PC-9 (cell line): ENCODE measurements at regions of chr6 and their contacts with region 1.

Region 1: DNA sequence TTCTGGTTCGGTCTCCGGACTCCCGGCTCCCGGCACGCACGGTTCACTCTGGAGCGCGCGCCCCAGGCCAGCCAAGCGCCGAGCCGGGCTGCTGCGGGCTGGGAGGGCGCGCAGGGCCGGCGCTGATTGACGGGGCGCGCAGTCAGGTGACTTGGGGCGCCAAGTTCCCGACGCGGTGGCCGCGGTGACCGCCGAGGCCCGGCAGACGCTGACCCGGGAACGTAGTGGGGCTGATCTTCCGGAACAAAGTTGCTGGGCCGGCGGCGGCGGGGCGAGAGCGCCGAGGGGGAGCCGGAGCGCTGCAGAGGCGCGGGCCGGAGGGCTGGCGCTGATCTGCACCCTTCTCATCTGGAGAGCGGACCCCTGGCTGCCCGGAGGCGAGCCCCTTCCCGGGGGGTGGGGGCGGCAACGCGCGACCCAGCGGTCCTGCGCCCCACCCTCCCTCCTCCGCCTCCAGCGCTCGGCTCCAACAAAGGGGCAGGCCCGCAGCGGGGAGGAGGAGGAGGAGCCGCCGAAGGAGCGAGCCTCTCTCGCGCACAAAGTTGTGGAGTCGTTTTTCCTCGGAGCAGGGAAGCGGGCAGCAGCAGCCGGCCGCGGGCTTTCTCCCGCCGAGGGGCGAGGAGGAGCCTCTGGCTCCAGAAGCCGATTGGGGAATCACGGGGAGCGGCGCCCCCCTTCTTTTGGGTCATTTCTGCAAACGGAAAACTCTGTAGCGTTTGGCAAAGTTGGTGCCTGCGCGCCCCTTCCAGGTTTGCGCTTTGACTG is at the start of gene UTRN:
- DNase-seq: peak; percentile 68 to 81
- H3K4me3 ChIP-seq: peak within 1 kb of the TSS; percentile 93
- H3K27ac ChIP-seq: peak within 1 kb of the TSS; percentile 87
- H3K4me1 ChIP-seq: peaks cover 24% of the 10 kb centered on the region
- H3K27me3 ChIP-seq: no peaks in the 10 kb centered on the region
- CTCF ChIP-seq: no peak
- total RNA-seq, gene UTRN: 108 and 125 TPM in 2 replicates

Region 2: GRCh38 chr6:144149891-144150709 is 134.9 kb before region 1 on chr6 and contains the start of gene STX11:
- CTCF ChIA-PET with region 1: no interaction called
- POLR2A ChIA-PET with region 1: no interaction called
- intact Hi-C with region 1: loop called (anchors 1 kb)
- DNase-seq: peak in 1 of 2 experiments; percentile 64
- H3K4me3 ChIP-seq: peak within 1 kb of the TSS; percentile 76
- H3K27ac ChIP-seq: peak within 1 kb of the TSS; percentile 38; the same call in 1 of the 2 replicates
- H3K4me1 ChIP-seq: peaks cover 11% of the 10 kb centered on the region; the same call in 1 of the 2 replicates
- H3K27me3 ChIP-seq: no peaks in the 10 kb centered on the region
- CTCF ChIP-seq: no peak
- total RNA-seq, gene STX11: 0.17 and 0.40 TPM in 2 replicates

Region 3: GRCh38 chr6:144305985-144306384 is 21.0 kb after region 1 on chr6:
- CTCF ChIA-PET with region 1: no interaction called
- POLR2A ChIA-PET with region 1: interaction called, 12 read pairs
- intact Hi-C with region 1: no loop called
- DNase-seq: no peak
- H3K4me3 ChIP-seq: no peak overlapping the region
- H3K27ac ChIP-seq: no peak overlapping the region
- H3K4me1 ChIP-seq: no peaks in the 10 kb centered on the region
- H3K27me3 ChIP-seq: no peaks in the 10 kb centered on the region
- CTCF ChIP-seq: no peak

Region 4: DNA sequence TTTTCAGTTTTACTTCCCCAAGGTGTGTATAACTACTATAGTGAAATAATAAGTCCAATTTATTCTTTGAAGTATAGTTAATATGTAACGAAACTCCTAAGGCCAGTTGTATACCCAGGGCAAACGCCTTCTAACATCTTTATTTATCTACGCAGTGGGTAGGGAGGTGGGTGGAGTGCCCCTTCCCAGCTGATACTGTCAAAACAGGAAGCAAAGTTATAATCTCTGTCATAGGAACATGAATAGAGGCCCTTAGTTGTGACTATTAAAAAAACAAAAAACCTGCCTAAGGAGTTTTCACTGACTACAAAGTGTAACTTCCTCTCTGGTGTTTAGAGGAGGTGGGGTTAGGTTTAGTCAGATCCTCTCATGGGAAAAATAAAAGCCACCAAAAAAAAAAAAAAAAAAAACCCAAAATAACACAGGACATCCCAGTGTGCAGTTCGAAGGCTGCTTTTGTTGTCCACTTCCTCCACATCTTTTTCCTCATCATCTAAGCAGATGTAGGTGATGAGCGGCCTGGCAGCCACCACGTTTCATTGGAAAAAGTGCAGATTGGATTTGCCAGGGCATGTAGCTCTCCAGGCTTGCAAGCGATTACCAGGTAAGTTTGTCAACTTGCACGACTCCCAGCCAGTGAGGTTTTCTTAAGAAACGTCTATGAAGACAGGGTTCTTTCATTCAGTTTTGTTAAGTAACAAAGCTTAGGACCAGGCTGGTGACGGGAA is 58.9 kb after region 1 on chr6:
- CTCF ChIA-PET with region 1: no interaction called
- POLR2A ChIA-PET with region 1: interaction called, 20 read pairs
- intact Hi-C with region 1: no loop called
- DNase-seq: no peak
- H3K4me3 ChIP-seq: no peak overlapping the region
- H3K27ac ChIP-seq: 0 out of 2 replicates have a peak overlapping the region, but pooled peaks have one; percentile 13
- H3K4me1 ChIP-seq: peaks cover 53% of the 10 kb centered on the region
- H3K27me3 ChIP-seq: no peaks in the 10 kb centered on the region
- CTCF ChIP-seq: no peak

Region 5: DNA sequence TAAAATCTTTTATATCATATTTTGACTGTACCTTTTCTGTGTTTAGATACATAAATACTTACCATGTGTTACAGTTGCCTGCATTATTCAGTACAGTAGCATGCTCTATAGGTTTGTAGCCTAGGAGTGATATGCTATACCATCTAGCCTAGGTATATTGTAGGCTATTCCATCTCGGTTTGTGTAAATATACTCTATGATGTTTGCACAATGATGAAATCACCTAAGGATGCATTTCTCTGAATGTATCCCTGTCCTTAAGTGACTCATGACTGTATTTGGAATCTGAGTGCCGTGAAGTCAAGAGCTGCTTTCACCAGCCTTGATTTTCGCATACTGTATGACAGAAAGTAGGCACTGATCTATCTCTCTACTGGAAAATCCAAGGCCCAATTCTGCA is 130.0 kb after region 1 on chr6:
- CTCF ChIA-PET with region 1: no interaction called
- POLR2A ChIA-PET with region 1: interaction called, 4 read pairs
- intact Hi-C with region 1: loop called (anchors 5 kb)
- DNase-seq: peak; percentile 12 to 87
- H3K4me3 ChIP-seq: peak overlapping the region; percentile 9; the same call in 1 of the 2 replicates
- H3K27ac ChIP-seq: peak overlapping the region; percentile 86
- H3K4me1 ChIP-seq: peaks cover 45% of the 10 kb centered on the region
- H3K27me3 ChIP-seq: no peaks in the 10 kb centered on the region
- CTCF ChIP-seq: no peak